ENCODE measurements at regions of chr7 and their contacts with region 1.

Region 1: DNA sequence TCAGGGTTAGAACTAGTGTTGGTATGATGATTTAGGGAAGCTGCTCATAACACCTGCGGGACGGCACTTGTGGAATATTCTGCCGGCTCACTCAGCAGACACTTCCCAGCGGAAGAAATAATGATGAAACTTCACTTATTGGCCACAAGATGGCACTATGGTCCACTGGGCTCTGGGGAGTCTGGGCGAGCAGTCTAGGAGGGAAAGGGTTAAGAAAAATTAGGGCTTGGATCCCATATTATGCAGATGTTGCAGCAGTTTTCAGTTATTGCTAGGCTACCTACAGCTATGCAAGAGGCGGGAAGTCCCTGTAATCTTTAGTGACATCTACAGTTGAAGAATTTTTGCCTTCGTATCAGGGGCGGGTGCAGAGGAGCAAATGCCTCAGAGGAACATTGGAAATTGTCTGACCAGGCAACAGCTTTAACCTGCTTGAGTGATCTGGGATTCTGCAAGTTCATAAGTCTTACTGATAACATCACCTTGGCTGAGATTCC is 238.7 kb upstream of the PRSS58 start:
- DNase-seq: no peak
- ATAC-seq: peak; percentile 48
- H3K4me3 Mint-ChIP-seq: peak overlapping the region; percentile 7
- H3K27ac Mint-ChIP-seq: no peak overlapping the region
- H3K4me1 Mint-ChIP-seq: peaks cover 23% of the 10 kb centered on the region
- H3K27me3 Mint-ChIP-seq: peaks cover 3% of the 10 kb centered on the region

Region 2: GRCh38 chr7:142478479-142479072 is 18.0 kb before region 1 on chr7:
- CTCF ChIA-PET with region 1: interaction called, 55 read pairs
- DNase-seq: peak; percentile 49
- ATAC-seq: peak; percentile 58
- H3K4me3 Mint-ChIP-seq: no peak overlapping the region
- H3K27ac Mint-ChIP-seq: peak overlapping the region; percentile 24
- H3K4me1 Mint-ChIP-seq: peaks cover 33% of the 10 kb centered on the region
- H3K27me3 Mint-ChIP-seq: no peaks in the 10 kb centered on the region

Region 3: GRCh38 chr7:142506601-142507000 is 10.0 kb after region 1 on chr7:
- CTCF ChIA-PET with region 1: interaction called, 10 read pairs
- DNase-seq: no peak
- ATAC-seq: no peak
- H3K4me3 Mint-ChIP-seq: no peak overlapping the region
- H3K27ac Mint-ChIP-seq: no peak overlapping the region
- H3K4me1 Mint-ChIP-seq: peaks cover 3% of the 10 kb centered on the region
- H3K27me3 Mint-ChIP-seq: peaks cover 8% of the 10 kb centered on the region

Region 4: DNA sequence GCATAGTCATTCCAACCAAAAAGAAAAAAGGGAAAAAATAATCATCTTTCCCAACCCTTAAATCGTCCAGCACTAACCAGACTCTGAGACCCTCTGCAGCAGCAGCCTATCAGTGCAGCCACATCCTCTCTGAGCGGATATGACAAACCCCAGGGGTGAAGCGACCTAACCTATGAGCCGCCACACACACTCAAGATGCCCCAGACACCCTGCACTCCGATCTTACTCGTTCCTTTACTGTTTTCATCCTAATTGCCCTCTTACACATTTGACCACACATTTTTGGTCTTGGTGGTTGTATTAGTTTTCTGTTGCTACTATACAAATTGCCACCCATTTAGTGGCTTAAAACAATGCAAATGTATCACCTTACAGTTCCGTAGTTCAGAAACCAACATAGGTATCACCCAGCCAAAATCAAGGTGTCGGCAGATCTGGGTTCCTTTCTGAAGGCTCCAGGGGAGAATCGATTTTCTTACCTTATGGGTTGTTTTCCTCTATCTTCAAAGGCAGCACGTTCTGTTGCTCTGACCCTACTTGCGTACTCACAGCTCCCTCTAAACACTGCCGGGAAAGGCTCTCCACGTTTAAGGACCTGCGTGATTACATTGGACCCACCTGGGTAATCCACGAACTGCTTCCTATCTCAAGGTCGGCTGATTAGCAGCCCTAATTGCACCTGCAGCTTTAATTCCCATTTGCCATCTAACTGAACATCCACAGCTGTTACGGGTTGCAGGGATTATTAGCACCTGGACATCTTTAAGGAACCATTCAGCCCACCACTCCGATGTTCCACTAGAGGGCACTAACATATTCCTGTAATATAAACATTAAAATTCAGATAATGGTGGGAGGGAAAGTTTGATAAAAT is 215.4 kb after region 1 on chr7:
- CTCF ChIA-PET with region 1: no interaction called
- DNase-seq: peak; percentile 77
- ATAC-seq: peak; percentile 83
- H3K4me3 Mint-ChIP-seq: peak overlapping the region; percentile 73
- H3K27ac Mint-ChIP-seq: peak overlapping the region; percentile 94
- H3K4me1 Mint-ChIP-seq: peaks cover 73% of the 10 kb centered on the region
- H3K27me3 Mint-ChIP-seq: no peaks in the 10 kb centered on the region